CD4-positive, alpha-beta memory T cell (primary cell): ENCODE measurements at regions of chr6 and their contacts with region 1.

Region 1: GRCh38 chr6:3848925-3849605 is at the start of gene FAM50B:
- DNase-seq: peak; percentile 90 to 92 (median 91)
- H3K4me3 ChIP-seq: peak within 1 kb of the TSS in 1 of 2 donors; percentile 63
- H3K4me3 Mint-ChIP-seq: peak within 1 kb of the TSS; percentile 79 to 87 (median 85)
- H3K27ac ChIP-seq: peak within 1 kb of the TSS; percentile 45
- H3K27ac Mint-ChIP-seq: peak within 1 kb of the TSS; percentile 66 to 96 (median 92)
- H3K4me1 ChIP-seq: peaks cover 34% of the 10 kb centered on the region
- H3K4me1 Mint-ChIP-seq: peaks cover 21 to 46% (median 29%) of the 10 kb centered on the region in 4 donors
- H3K27me3 ChIP-seq: no peaks in the 10 kb centered on the region
- H3K27me3 Mint-ChIP-seq: no peaks in the 10 kb centered on the region
- total RNA-seq, gene FAM50B: 15.0 to 15.4 TPM

Region 2: DNA sequence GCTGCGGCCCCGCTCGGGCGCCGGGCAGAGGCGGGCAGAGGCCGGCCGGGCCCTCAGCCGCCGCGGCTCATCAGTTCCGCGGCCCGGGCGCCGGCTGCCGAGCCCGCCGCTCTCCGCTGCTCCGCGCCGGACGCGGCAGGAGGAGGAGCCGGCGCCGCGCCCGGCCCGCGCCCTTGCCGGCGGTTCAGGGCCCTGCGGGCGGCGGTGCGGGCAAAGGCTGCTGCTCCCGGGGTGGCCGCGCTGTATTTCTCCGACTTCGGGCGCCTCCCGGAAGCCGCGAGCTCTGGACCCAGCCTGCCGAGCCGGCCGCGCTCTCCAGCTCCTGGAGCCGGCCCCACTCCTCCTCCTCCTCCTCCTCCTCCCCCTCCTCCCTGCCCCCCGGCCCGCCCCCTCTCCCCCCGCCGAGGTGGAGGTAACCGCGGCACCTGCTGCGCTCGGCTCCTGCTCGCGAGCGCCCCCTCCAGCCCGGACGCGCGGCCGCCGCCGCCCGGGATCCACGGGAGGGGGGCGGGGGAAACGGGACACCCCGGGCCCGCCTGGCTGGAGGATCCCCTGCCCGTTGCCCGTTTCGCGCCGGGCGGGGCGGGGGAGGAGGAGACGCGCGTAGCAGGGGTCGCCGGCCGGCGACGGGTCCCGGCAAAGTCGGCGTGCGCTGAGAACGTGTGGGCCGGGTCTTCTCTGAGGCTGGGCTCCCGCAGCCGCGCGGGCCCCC is 392.2 kb before region 1 on chr6 and contains the start of gene SLC22A23:
- CTCF ChIA-PET with region 1: no interaction called
- POLR2A ChIA-PET with region 1: no interaction called
- intact Hi-C with region 1: loop called (anchors 5 kb)
- DNase-seq: peak; percentile 74 to 79 (median 76)
- H3K4me3 ChIP-seq: peak within 1 kb of the TSS; percentile 55 to 63
- H3K4me3 Mint-ChIP-seq: peak within 1 kb of the TSS; percentile 81 to 92 (median 88)
- H3K27ac ChIP-seq: peak within 1 kb of the TSS; percentile 37
- H3K27ac Mint-ChIP-seq: peak within 1 kb of the TSS; percentile 62 to 89 (median 80)
- H3K4me1 ChIP-seq: peaks cover 35% of the 10 kb centered on the region
- H3K4me1 Mint-ChIP-seq: peaks cover 6 to 14% (median 9%) of the 10 kb centered on the region in 4 donors
- H3K27me3 ChIP-seq: peaks cover 6% of the 10 kb centered on the region
- H3K27me3 Mint-ChIP-seq: peaks cover 3 to 9% of the 10 kb centered on the region in 2 donors
- total RNA-seq, gene SLC22A23: 7.9 to 12.5 TPM

Region 3: DNA sequence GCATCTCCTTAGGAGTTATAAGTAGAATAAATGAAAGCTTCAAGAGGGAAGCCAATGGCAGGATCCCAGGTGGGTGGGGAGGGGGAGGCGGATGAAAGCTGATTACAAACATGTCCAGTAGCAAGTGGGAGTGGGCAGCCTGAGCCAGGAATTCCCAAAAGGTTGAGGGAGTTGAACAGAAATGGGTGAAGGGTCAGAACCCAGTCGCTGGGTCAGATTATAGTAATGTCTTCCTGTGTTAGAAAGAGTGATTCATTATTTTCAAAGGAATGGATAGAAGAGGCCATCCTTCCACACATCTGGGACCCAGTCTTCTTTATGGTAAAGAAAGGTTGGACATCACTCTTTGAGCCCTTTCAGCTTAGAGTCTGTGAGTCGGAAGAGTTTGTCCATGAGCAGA is 40.9 kb before region 1 on chr6:
- CTCF ChIA-PET with region 1: no interaction called
- POLR2A ChIA-PET with region 1: no interaction called
- intact Hi-C with region 1: no loop called
- DNase-seq: no peak
- H3K4me3 ChIP-seq: no peak overlapping the region
- H3K4me3 Mint-ChIP-seq: no peak overlapping the region
- H3K27ac ChIP-seq: no peak overlapping the region
- H3K27ac Mint-ChIP-seq: no peak overlapping the region
- H3K4me1 ChIP-seq: no peaks in the 10 kb centered on the region
- H3K4me1 Mint-ChIP-seq: peaks cover 0 to 2% (median under 1%) of the 10 kb centered on the region in 4 donors
- H3K27me3 ChIP-seq: no peaks in the 10 kb centered on the region
- H3K27me3 Mint-ChIP-seq: peaks cover 1 to 2% of the 10 kb centered on the region in 2 donors

Region 4: GRCh38 chr6:3861424-3861823 is 12.4 kb after region 1 on chr6:
- CTCF ChIA-PET with region 1: interaction called, 17 read pairs
- POLR2A ChIA-PET with region 1: interaction called, 9 read pairs
- intact Hi-C with region 1: no loop called
- DNase-seq: no peak
- H3K4me3 ChIP-seq: no peak overlapping the region
- H3K4me3 Mint-ChIP-seq: no peak overlapping the region
- H3K27ac ChIP-seq: no peak overlapping the region
- H3K27ac Mint-ChIP-seq: no peak overlapping the region
- H3K4me1 ChIP-seq: no peaks in the 10 kb centered on the region
- H3K4me1 Mint-ChIP-seq: peaks cover 0 to under 1% (median 0%) of the 10 kb centered on the region in 4 donors
- H3K27me3 ChIP-seq: no peaks in the 10 kb centered on the region
- H3K27me3 Mint-ChIP-seq: peaks cover 0 to 4% of the 10 kb centered on the region in 2 donors

Region 5: DNA sequence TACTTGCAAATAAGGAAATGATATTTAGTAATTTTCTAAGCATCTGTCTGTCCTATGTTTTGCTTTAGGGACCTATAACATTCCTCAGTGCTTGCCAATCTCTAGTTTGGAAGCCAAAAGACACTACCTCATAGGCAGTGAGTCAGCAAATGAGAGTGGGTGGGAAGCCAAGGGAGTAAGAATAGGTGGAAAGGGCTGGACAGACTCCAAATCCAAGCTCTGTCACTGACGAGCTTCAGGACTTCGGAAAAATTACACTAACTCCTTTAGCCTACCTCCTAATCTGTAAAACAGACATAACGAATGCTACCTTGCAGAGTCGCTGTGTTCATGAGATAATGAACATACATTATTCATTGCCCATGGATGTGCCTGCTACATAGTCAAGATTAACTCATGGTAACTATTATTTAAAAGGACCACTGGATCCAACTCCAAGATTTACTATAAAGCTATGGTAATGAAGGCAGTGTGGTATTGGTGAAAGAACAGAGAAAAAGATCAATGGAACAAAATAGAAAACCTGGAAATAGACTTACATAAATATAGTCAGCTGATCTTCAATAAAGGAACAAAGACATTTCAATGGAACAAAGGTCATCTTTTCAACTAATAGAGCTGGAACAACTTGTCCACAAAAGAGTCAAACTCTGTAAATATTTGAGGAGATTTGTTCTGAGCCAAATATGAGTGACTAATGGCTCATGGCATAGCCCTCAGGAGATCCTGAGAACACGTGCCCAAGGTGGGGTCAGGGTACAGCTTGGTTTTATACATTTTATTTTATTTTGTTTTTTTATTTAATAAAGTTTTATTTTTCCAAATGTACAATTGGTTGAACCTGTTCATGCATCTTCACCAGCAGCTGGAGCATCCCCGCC is 64.3 kb after region 1 on chr6:
- CTCF ChIA-PET with region 1: interaction called, 13 read pairs
- POLR2A ChIA-PET with region 1: interaction called, 7 read pairs
- intact Hi-C with region 1: no loop called
- DNase-seq: no peak
- H3K4me3 ChIP-seq: no peak overlapping the region
- H3K4me3 Mint-ChIP-seq: peak overlapping the region in 1 of 8 donors; percentile 15
- H3K27ac ChIP-seq: no peak overlapping the region
- H3K27ac Mint-ChIP-seq: no peak overlapping the region
- H3K4me1 ChIP-seq: peaks cover 43% of the 10 kb centered on the region
- H3K4me1 Mint-ChIP-seq: peaks cover 29 to 56% (median 43%) of the 10 kb centered on the region in 4 donors
- H3K27me3 ChIP-seq: no peaks in the 10 kb centered on the region
- H3K27me3 Mint-ChIP-seq: peaks cover 2 to 16% of the 10 kb centered on the region in 2 donors

Region 6: GRCh38 chr6:3990692-3991501 is 141.8 kb after region 1 on chr6:
- CTCF ChIA-PET with region 1: interaction called, 21 read pairs
- POLR2A ChIA-PET with region 1: no interaction called
- intact Hi-C with region 1: no loop called
- DNase-seq: peak; percentile 52 to 68 (median 58)
- H3K4me3 ChIP-seq: no peak overlapping the region
- H3K4me3 Mint-ChIP-seq: no peak overlapping the region
- H3K27ac ChIP-seq: no peak overlapping the region
- H3K27ac Mint-ChIP-seq: peak overlapping the region in 4 of 7 donors; percentile 33 to 91 (median 56)
- H3K4me1 ChIP-seq: peaks cover 8% of the 10 kb centered on the region
- H3K4me1 Mint-ChIP-seq: peaks cover 9 to 23% (median 14%) of the 10 kb centered on the region in 4 donors
- H3K27me3 ChIP-seq: no peaks in the 10 kb centered on the region
- H3K27me3 Mint-ChIP-seq: no peaks in the 10 kb centered on the region